Prostate gland (tissue), 2 donors: ENCODE measurements at regions of chr1 and their contacts with region 1.

Region 1: DNA sequence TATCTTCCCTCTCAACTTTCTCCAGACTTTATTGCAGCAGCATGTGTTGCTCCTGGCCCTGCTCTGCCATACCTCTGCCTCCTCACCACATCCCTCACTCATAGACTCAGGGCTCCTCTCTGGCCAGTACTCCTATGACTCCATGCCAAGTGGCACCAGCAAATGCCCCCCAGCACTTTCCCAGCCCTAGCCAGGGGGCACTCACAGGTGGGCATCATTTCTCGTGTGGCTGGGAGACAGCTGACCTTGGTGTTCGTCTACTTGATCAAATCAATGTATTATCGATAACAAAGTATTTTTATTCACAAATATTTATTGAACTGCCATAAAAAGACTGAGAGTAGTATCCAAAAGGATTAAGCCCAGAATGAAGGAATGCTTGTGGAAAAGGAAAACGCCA is 418.2 kb downstream of the FAM72C start:
- DNase-seq: no peak
- H3K4me3 ChIP-seq: no peak overlapping the region
- H3K27ac ChIP-seq: no peak overlapping the region
- H3K4me1 ChIP-seq: no peaks in the 10 kb centered on the region
- H3K27me3 ChIP-seq: no peaks in the 10 kb centered on the region
- CTCF ChIP-seq: no peak
- POLR2A ChIP-seq: no peak

Region 2: GRCh38 chr1:143604887-143605286 is 51.3 kb after region 1 on chr1:
- intact Hi-C with region 1: loop called (anchors 10 kb)
- DNase-seq: no peak
- H3K4me3 ChIP-seq: no peak overlapping the region
- H3K27ac ChIP-seq: no peak overlapping the region
- H3K4me1 ChIP-seq: no peaks in the 10 kb centered on the region
- H3K27me3 ChIP-seq: no peaks in the 10 kb centered on the region
- CTCF ChIP-seq: no peak
- POLR2A ChIP-seq: no peak

Region 3: GRCh38 chr1:143643148-143643885 is 89.7 kb after region 1 on chr1:
- intact Hi-C with region 1: no loop called
- DNase-seq: no peak
- H3K4me3 ChIP-seq: no peak overlapping the region
- H3K27ac ChIP-seq: no peak overlapping the region
- H3K4me1 ChIP-seq: no peaks in the 10 kb centered on the region
- H3K27me3 ChIP-seq: no peaks in the 10 kb centered on the region
- CTCF ChIP-seq: no peak
- POLR2A ChIP-seq: no peak

Region 4: DNA sequence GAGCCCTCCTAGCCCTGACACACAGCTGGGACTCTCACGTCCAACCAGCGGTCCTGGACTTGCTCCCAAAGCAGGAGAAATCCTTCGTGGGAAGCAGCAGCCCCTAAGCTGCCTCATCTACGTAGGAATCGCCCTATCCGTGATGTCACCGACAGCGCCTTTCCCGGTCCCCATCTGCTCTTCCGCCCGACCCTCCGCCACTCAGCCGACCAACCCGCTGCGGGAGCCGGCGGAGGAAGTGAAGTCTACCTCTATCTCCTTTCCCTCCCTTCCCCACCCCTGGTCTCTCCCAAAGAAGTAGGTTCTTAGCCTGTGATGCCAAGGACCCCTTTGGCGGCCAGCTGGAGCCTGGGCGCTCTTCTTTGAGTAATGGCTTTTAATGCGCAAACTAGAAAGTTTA is 146.1 kb after region 1 on chr1:
- intact Hi-C with region 1: no loop called
- DNase-seq: no peak
- H3K4me3 ChIP-seq: no peak overlapping the region
- H3K27ac ChIP-seq: no peak overlapping the region
- H3K4me1 ChIP-seq: no peaks in the 10 kb centered on the region
- H3K27me3 ChIP-seq: no peaks in the 10 kb centered on the region
- CTCF ChIP-seq: no peak
- POLR2A ChIP-seq: no peak